BJ (cell line): ENCODE measurements at regions of chr9 and their contacts with region 1.

Region 1: DNA sequence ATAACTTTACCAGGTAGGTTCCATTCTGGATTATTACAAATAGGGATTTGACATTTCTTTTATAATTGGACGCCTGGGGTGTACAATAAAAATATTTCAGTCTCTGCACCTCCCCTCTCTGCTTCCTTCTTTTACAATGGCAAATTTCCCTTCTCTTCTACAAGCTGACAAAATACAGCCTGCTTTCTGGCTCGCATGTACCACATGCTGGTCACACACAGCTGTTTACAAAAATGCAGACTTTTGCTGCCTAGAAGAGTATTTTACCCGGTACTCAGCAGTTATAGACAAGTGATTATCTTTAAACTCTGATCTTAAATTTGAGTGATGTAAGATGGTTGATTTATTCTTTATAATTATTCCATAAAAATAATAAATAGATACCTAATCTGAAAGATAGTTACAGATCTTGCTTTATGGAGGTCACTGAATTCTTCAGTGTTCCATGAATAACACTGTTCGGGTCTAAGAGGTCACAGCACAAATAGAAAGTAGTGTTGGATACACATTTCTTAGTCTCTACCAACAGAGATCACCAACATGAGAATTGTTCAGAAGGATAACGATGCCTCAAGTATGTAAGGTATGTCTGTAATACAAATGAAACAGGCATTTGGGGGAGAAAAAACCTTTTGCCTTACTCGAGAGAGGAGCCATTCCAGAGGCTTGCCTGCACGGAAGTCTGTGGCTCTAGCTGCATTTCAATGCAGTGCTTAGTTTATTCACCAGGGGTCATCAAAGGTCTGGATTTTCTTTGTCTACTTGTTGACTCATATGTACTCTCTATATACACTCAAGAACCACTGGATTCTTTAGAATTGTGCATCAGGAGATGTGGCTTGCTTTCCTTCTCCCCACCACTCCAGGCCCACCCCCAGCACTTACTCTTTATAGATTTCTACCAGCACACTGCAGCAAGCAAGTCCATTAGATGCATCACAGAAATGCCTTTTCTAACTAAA is 206.6 kb upstream of the RFX3 start:
- DNase-seq: peak; percentile 72
- H3K4me3 ChIP-seq: no peak overlapping the region
- H3K27me3 ChIP-seq: no peaks in the 10 kb centered on the region
- CTCF ChIP-seq: peak; percentile 67

Region 2: DNA sequence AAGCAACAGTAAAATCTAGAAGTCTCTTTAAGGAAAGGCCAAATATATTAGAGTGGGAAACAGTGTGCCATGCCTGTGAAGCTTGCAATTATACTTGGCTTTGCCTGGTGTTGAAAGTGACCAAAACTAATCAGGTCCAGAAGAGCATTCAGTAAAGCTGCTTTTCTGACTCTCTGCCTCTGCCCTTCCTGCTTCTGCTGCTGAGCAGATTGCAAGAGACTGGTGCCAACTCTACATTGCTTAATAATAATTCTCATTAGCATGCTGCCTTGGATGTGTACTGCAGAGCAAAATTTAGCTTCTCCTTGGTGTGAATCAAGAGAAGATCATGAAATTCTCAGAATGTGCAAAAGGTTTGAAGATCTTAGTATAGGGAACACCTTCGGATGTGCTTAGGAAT is 86.1 kb before region 1 on chr9:
- CTCF ChIA-PET with region 1: no interaction called
- POLR2A ChIA-PET with region 1: no interaction called
- DNase-seq: no peak
- H3K4me3 ChIP-seq: no peak overlapping the region
- H3K27me3 ChIP-seq: no peaks in the 10 kb centered on the region
- CTCF ChIP-seq: no peak

Region 3: GRCh38 chr9:4228606-4229005 is 496.2 kb after region 1 on chr9:
- CTCF ChIA-PET with region 1: interaction called, 22 read pairs
- POLR2A ChIA-PET with region 1: no interaction called
- DNase-seq: no peak
- H3K4me3 ChIP-seq: no peak overlapping the region
- H3K27me3 ChIP-seq: no peaks in the 10 kb centered on the region
- CTCF ChIP-seq: peak; percentile 71

Region 4: DNA sequence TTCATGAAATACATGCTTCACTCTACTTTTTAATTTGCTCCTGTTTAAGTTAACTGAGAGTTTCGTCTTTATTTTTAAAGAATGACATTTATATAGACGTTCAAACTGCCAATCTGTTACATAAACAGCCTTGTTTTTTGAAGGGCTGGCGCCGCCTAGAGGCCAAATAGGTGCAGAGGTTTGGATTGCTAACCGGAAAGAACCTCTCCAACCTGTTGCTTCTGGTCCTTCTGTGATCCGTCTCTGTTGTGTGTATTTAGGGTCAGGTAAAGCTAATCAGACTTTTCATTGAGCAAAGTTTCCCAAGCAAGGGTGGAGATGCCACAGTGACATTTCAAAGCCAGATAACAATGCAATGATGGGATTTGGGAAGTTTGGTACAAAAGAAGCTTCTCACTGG is 607.0 kb after region 1 on chr9:
- CTCF ChIA-PET with region 1: interaction called, 14 read pairs
- POLR2A ChIA-PET with region 1: no interaction called
- DNase-seq: peak; percentile 20
- H3K4me3 ChIP-seq: no peak overlapping the region
- H3K27me3 ChIP-seq: no peaks in the 10 kb centered on the region
- CTCF ChIP-seq: peak; percentile 97

Region 5: DNA sequence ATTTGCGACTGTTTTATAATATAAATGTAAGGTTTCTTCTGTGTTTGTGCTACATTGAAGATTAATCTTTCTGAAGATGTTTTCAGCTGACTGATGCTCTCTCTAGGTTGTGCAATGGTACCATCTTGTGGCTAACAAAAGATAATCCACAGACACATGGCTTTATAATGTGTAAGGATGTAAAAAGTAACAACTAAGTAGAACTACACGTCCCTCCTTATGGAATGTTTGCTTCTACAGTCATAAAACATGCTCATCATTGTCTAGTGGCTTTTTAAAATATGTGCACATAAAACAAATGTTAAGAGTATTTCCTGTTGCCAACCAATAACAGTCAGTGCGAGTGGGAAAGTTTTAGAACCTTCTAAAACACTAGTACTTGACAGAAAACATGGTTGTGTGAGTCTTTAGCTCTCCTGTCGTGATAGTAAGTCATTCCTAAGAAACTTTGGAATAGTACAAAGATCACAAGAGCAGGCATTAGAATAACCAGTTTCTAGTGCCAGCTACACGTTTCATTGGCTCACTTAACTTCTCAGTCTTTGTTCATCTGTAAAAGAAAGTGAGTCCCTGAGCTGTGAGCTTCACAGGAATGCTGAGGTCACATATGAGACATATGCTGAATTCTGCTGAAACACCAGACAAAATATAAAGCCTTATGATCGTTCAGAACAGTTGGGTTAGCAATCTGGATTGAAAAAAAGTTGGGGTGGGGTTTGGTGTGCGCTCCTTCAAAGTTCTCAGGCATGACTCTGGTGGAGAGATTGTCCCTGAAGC is 643.3 kb after region 1 on chr9:
- CTCF ChIA-PET with region 1: interaction called, 11 read pairs
- POLR2A ChIA-PET with region 1: no interaction called
- DNase-seq: peak; percentile 85
- H3K4me3 ChIP-seq: no peak overlapping the region
- H3K27me3 ChIP-seq: no peaks in the 10 kb centered on the region; the same call in 1 of the 2 replicates
- CTCF ChIP-seq: peak; percentile 56